ENCODE measurements at regions of chr18 and their contacts with region 1.

Region 1: GRCh38 chr18:74242438-74243096 is 49.2 kb downstream of the CYB5A start:
- DNase-seq: peak in 3 of 5 donors; percentile 29 to 41 (median 40)
- ATAC-seq: peak in 3 of 4 donors; percentile 72 to 85 (median 85)
- H3K4me3 ChIP-seq: peak overlapping the region in 7 of 12 donors; percentile 14 to 42 (median 24)
- H3K27ac ChIP-seq: no peak overlapping the region
- H3K4me1 ChIP-seq: peaks cover 0 to 4% (median 0%) of the 10 kb centered on the region in 12 donors
- H3K27me3 ChIP-seq: peaks cover 0 to 9% (median 0%) of the 10 kb centered on the region in 9 donors
- CTCF ChIP-seq: peak in 11 of 12 donors; percentile 17 to 60 (median 53)
- POLR2A ChIP-seq: no peak

Region 2: DNA sequence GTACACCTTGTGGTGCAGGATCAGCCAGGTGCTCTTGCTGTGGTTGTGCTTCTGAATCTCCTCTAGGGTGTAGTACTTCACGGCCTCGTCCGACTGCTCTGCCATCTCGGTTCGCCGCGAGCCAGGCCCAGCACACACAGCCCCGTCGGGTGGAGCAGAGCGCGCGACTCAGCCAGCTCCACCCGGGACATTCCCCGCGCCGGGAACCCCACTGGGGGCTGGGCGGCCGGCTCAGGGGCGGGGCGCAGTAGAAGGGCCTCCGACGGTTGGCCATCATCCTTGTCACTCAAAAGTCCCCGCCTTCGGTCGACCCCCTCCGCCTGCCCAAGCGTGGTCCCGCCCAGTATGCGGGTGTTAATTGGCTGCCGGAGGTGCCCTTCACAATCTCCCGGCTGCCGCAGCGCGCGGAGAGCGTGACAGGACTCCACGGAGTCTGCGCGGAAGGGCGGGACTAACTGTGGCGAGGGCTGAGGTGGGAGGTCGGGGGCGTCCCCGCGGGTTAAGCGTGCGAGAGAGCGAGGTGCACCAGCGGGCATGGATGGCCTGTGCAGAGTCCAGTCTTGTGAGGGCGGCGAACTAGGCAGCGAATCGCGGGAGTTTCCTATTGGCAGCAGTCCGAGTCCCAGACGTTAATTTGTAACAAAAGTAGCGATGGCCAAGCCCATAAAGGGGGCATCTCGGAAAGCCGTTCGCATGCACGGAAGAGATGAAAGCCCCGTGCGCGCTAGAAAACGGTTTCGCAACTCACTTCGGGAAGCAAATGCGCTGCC is 49.4 kb after region 1 on chr18 and contains the start of gene CYB5A:
- intact Hi-C with region 1: loop called in 1 of 10 experiments (anchors 10 kb)
- DNase-seq: peak; percentile 98 to 99 (median 99)
- ATAC-seq: peak; percentile 99 to 100 (median 99)
- H3K4me3 ChIP-seq: peak within 1 kb of the TSS; percentile 65 to 96 (median 87)
- H3K27ac ChIP-seq: peak within 1 kb of the TSS in 11 of 12 donors; percentile 35 to 89 (median 72)
- H3K4me1 ChIP-seq: peaks cover 0 to 40% (median 22%) of the 10 kb centered on the region in 12 donors
- H3K27me3 ChIP-seq: no peaks in the 10 kb centered on the region
- CTCF ChIP-seq: peak in 2 of 12 donors; percentile 10 to 26
- POLR2A ChIP-seq: peak in 1 of 2 donors; percentile 81
- total RNA-seq, gene CYB5A: 46.5 to 146 (median 83.3) TPM

Region 3: GRCh38 chr18:74331404-74331803 is 88.8 kb after region 1 on chr18:
- intact Hi-C with region 1: loop called in 3 of 10 experiments (anchors 5 kb)
- DNase-seq: no peak
- ATAC-seq: peak in 3 of 4 donors; percentile 61 to 78 (median 72)
- H3K4me3 ChIP-seq: no peak overlapping the region
- H3K27ac ChIP-seq: no peak overlapping the region
- H3K4me1 ChIP-seq: peaks cover 0 to 8% (median 0%) of the 10 kb centered on the region in 12 donors
- H3K27me3 ChIP-seq: no peaks in the 10 kb centered on the region
- CTCF ChIP-seq: peak in 11 of 12 donors; percentile 19 to 53 (median 40)
- POLR2A ChIP-seq: no peak

Region 4: DNA sequence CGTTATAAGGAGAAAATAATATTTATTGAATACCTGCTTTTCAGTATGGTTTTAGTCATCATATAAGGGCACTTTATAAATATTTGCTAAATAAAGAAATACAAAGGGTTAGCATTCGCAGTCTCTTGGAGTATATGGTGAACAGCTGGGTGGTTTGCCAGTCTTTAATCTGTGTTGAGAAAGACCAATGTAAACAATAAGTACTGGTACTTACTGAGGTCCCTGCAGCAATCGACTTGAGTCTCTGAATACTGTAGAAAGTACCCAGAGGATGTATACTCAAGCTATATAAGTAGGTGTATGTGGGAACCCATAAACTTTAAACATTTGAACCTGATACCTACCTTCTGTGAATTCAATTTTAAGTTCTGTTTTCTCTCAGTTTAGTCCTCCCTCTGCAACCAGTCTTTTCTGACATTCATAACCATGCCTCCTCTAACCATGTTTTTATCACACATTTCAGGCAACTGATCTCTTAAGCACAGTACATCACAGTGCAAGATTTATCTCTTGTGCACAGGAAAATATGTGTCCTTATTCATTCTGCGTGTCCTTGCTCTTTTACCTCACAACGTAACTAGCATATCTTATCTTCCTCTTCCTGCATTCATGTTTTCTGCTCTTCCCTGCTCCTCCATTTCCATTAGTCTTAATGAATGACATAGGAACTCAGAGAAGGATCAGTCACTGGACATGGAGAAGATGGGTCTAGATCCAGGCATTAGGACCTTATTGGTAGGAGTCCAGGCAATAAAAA is 94.8 kb after region 1 on chr18:
- intact Hi-C with region 1: loop called (anchors 1 to 5 kb)
- DNase-seq: no peak
- ATAC-seq: no peak
- H3K4me3 ChIP-seq: no peak overlapping the region
- H3K27ac ChIP-seq: no peak overlapping the region
- H3K4me1 ChIP-seq: peaks cover 0 to 8% (median 0%) of the 10 kb centered on the region in 12 donors
- H3K27me3 ChIP-seq: peaks cover 0 to 2% (median 0%) of the 10 kb centered on the region in 9 donors
- CTCF ChIP-seq: no peak
- POLR2A ChIP-seq: no peak

Region 5: GRCh38 chr18:74342416-74343043 is 100.0 kb after region 1 on chr18:
- intact Hi-C with region 1: loop called in 9 of 10 experiments (anchors 1 to 5 kb)
- DNase-seq: peak in 1 of 5 donors; percentile 32
- ATAC-seq: no peak
- H3K4me3 ChIP-seq: no peak overlapping the region
- H3K27ac ChIP-seq: no peak overlapping the region
- H3K4me1 ChIP-seq: no peaks in the 10 kb centered on the region
- H3K27me3 ChIP-seq: peaks cover 0 to 2% (median 0%) of the 10 kb centered on the region in 9 donors
- CTCF ChIP-seq: peak; percentile 66 to 88 (median 77)
- POLR2A ChIP-seq: no peak

Region 6: GRCh38 chr18:74378179-74378682 is 135.7 kb after region 1 on chr18:
- intact Hi-C with region 1: no loop called
- DNase-seq: peak in 2 of 5 donors; percentile 20 to 39
- ATAC-seq: peak in 3 of 4 donors; percentile 45 to 79 (median 52)
- H3K4me3 ChIP-seq: no peak overlapping the region
- H3K27ac ChIP-seq: no peak overlapping the region
- H3K4me1 ChIP-seq: peaks cover 0 to 13% (median 0%) of the 10 kb centered on the region in 12 donors
- H3K27me3 ChIP-seq: no peaks in the 10 kb centered on the region
- CTCF ChIP-seq: no peak
- POLR2A ChIP-seq: no peak

Measured in heart left ventricle (tissue), 16 donors.